ENCODE measurements at regions of chr3 and their contacts with region 1.

Region 1: DNA sequence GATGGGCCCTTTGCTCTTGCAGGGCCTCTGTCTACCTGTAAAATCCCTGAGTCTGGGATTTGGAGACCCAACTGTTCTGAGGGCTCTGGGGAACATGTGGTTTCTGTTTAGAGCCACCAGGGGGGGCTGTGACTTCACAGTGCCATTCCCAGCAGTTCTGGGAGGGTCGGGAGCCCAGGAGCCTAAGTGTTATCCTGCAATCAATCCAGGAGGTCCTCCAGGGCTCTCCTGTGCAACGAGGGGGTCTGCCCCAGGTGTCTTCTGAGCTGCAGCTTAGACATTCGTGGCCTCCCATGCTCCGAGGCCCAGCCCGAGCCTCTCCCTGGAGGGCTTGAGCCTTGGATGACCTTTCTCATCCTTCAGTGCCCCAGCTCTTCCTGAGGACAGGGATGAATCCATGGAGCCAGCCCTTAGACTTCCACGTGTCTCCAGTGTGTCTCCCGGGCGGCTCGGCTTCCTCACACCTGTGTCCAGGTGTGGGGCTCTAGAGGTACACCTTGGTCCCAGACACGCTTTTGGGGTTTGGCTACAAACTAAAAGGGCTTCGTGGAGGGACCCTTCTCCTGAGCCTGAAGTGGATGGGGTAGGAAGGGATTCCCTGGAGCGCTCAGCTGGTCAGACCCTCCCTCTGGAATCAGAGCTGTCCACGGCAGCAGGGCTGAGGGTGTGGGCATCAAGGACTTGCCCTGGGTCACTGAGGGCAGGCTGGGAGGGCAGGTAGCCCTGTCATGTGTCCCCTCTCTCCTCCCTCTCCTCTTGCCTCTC is 20.3 kb upstream of the ABTB1 start:
- DNase-seq: peak; percentile 77
- H3K4me3 ChIP-seq: no peak overlapping the region
- H3K27ac ChIP-seq: no peak overlapping the region
- H3K4me1 ChIP-seq: peaks cover 0 to 15% (median 2%) of the 10 kb centered on the region in 4 donors
- H3K27me3 ChIP-seq: no peaks in the 10 kb centered on the region
- CTCF ChIP-seq: peak; percentile 70 to 94 (median 80)
- EP300 ChIP-seq: no peak
- POLR2A ChIP-seq: no peak

Region 2: GRCh38 chr3:127690823-127691452 is 38.5 kb after region 1 on chr3:
- intact Hi-C with region 1: loop called (anchors 2 kb)
- DNase-seq: no peak
- H3K4me3 ChIP-seq: no peak overlapping the region
- H3K27ac ChIP-seq: peak overlapping the region; percentile 74 to 86 (median 82)
- H3K4me1 ChIP-seq: peaks cover 0 to 40% (median 37%) of the 10 kb centered on the region in 4 donors
- H3K27me3 ChIP-seq: no peaks in the 10 kb centered on the region
- CTCF ChIP-seq: peak; percentile 44 to 63 (median 59)
- EP300 ChIP-seq: no peak
- POLR2A ChIP-seq: no peak

Region 3: DNA sequence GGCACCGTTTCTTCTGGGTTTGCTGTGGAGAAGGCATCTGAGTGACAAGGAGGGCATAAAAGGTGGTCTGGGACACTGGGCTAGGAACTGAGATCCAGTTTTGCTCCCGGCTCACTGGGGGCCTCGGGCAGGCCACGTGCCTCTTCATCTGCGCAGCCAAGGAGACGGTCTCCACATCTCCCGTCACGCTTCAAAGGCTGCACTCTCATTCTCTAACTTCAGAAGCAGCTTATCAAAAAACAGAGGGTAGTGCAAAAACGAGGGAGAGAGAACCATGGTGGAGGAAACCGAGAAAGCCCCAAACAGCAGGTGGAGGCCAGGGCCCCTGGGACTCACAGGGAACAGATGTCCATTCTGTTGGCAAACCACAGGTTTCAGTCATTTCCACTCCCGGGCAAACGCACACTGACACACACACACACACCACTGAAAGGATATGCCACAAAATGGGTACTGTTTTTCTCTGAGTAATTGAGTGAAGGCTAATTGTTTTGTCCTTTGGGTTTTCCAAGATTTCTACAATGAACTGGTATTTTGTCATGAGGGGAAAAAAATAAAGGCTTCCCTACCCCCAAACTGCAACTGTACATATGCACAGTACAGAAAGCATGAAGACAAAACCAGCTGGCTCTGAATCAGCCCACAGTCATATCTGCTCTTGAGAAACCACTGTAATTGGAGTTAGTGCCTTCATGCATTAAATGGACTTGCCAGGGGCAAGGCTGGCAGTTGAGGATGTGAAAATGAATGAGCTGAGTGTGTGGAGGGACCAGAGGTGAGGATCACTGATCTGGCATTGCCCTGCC is 98.0 kb after region 1 on chr3:
- intact Hi-C with region 1: no loop called
- DNase-seq: no peak
- H3K4me3 ChIP-seq: no peak overlapping the region
- H3K27ac ChIP-seq: peak overlapping the region in 2 of 4 donors; percentile 73 to 74
- H3K4me1 ChIP-seq: peaks cover 0 to 53% (median 33%) of the 10 kb centered on the region in 4 donors
- H3K27me3 ChIP-seq: no peaks in the 10 kb centered on the region
- CTCF ChIP-seq: no peak
- EP300 ChIP-seq: no peak
- POLR2A ChIP-seq: no peak

Region 4: DNA sequence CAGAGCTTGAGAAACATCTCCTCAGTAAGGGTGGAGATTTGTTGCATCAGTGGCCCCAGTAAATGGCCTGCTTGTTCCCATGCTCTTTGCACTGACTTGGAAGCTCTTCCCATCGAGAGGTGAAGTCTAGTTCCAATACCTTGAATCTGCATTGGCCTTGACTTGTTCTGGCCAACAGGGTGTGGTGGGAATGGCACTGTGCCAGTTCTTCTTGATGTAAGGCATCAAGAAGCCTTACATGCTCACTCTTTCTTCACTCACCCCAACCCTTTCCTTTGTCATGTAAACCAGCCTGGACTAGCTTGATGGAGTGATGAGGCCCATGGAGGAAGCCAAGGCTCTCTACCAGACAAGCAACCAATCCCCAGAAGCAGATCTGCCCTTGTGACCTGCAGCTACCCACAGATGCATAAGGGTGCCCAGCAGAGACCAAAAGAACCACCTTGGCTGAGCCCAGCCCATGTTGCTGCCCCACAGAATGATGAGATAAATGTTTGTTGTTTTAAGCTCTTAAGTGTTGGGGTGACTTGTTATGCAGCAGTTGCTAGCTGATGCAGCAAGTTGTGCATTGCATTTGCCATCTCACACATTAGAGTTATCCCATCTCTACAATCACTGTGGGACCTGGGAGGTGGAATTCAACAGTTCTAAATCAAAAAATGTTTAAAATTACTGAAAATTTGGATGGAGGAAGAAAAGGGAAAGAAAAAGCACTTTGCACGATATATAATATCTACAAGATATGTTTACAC is 181.0 kb after region 1 on chr3:
- intact Hi-C with region 1: loop called (anchors 1 kb)
- DNase-seq: no peak
- H3K4me3 ChIP-seq: no peak overlapping the region
- H3K27ac ChIP-seq: no peak overlapping the region
- H3K4me1 ChIP-seq: no peaks in the 10 kb centered on the region
- H3K27me3 ChIP-seq: no peaks in the 10 kb centered on the region
- CTCF ChIP-seq: no peak
- EP300 ChIP-seq: no peak
- POLR2A ChIP-seq: no peak

Region 5: GRCh38 chr3:127970966-127971592 is 318.7 kb after region 1 on chr3:
- intact Hi-C with region 1: loop called (anchors 2 kb)
- DNase-seq: no peak
- H3K4me3 ChIP-seq: no peak overlapping the region
- H3K27ac ChIP-seq: no peak overlapping the region
- H3K4me1 ChIP-seq: peaks cover 0 to 17% (median 15%) of the 10 kb centered on the region in 4 donors
- H3K27me3 ChIP-seq: no peaks in the 10 kb centered on the region
- CTCF ChIP-seq: peak in 3 of 4 experiments; percentile 36 to 51 (median 37)
- EP300 ChIP-seq: no peak
- POLR2A ChIP-seq: no peak

Measured in sigmoid colon (tissue), 7 donors.